Activated naive CD4-positive, alpha-beta T cell treated with anti-CD3 and anti-CD28 coated beads, Interleukin-2, amount 10 ng/mL, durations not matched to agents 7 days and 5 days (primary cell): ENCODE measurements at regions of chr14 and their contacts with region 1.

Region 1: DNA sequence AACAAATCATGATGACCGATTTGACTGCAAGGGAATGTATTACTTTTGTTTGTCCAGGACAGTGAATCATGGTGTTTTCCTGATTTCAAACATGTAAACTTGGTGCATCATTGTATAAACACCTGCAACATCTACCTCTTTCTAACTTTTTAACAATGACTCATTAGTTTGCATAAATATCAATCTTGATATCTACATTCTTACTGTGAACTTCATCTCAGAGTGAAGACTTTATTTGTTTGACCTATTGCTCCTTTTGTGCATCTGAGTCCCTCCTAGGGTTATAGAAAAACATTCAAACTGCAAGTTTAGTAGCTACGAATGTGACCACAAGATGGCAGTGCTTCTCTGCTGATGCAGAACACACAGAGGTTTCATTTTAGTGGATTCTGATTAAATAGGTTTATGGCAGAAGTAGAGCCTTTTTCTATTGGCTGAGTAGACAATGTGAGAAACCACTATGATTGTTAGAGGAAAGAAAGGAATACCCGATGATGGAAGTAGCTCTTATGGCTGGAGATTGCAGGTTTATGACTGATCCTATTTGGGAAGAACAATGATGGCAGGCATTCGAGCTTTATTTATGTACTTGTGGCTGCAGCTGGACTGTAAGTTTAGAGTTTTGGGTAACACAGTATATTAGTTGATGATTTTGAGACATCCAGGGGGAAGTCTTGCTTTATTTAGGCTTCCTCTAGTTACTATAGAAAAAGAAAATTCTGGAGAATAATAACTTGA is 244.2 kb upstream of the OR4E1 start:
- DNase-seq: peak; percentile 77
- H3K4me3 Mint-ChIP-seq: peak overlapping the region; percentile 71
- H3K27ac Mint-ChIP-seq: peak overlapping the region; percentile 81
- H3K4me1 Mint-ChIP-seq: peaks cover 78% of the 10 kb centered on the region
- H3K27me3 Mint-ChIP-seq: no peaks in the 10 kb centered on the region

Region 2: DNA sequence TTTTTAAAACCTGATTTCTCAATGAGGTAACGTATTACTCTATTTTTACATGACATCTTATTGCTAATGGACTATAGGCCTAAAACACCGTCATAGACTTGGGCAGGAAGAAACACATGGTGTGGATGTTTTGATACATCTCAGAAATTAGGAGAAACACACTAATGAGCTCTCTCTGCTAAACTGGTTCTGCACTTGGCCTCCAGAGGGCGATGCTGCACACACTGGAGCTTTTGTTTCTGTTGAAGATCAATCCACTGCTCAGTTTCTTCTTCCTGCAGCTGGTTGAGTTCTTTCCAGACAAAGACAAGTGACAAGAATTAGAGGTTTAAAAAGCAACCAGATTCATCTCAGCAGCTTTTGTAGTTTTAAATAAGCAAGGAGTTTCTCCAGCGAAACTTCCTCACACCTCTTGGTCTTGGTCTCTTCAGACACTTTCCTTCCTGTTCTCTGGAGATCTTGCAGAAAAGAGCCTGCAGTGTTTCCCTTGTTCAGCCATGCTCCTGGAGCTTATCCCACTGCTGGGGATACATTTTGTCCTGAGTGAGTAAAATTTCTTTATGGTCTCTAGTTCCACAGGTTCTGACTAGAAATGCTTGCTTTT is 65.7 kb before region 1 on chr14:
- CTCF ChIA-PET with region 1: interaction called, 10 read pairs
- DNase-seq: peak; percentile 85
- H3K4me3 Mint-ChIP-seq: peak overlapping the region; percentile 70
- H3K27ac Mint-ChIP-seq: peak overlapping the region; percentile 89
- H3K4me1 Mint-ChIP-seq: peaks cover 13% of the 10 kb centered on the region
- H3K27me3 Mint-ChIP-seq: peaks cover 13% of the 10 kb centered on the region

Region 3: DNA sequence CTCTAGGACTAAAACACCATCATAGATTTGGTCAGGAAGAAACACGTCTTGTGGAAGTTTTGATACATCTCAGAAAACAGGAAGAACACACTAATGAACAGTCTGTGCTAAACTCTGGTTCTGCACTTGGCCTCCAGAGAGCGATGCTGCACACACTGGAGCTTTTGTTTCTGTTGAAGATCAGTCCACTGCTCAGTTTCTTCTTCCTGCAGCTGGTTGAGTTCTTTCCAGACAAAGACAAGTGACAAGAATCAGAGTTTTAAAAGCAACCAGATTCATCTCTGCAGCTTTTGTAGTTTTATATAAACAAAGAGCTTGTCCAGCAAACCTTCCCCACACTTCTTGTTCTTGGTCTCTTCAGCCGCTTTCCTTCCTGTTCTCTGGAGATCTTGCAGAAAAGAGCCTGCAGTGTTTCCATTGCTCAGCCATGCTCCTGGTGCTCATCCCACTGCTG is 15.2 kb before region 1 on chr14:
- CTCF ChIA-PET with region 1: interaction called, 23 read pairs
- DNase-seq: peak; percentile 65
- H3K4me3 Mint-ChIP-seq: peak overlapping the region; percentile 67
- H3K27ac Mint-ChIP-seq: peak overlapping the region; percentile 76
- H3K4me1 Mint-ChIP-seq: peaks cover 19% of the 10 kb centered on the region
- H3K27me3 Mint-ChIP-seq: peaks cover 9% of the 10 kb centered on the region

Region 4: GRCh38 chr14:21965042-21965441 is 47.2 kb after region 1 on chr14:
- CTCF ChIA-PET with region 1: interaction called, 11 read pairs
- DNase-seq: peak; percentile 72
- H3K4me3 Mint-ChIP-seq: peak overlapping the region; percentile 49
- H3K27ac Mint-ChIP-seq: peak overlapping the region; percentile 49
- H3K4me1 Mint-ChIP-seq: peaks cover 43% of the 10 kb centered on the region
- H3K27me3 Mint-ChIP-seq: no peaks in the 10 kb centered on the region

Region 5: DNA sequence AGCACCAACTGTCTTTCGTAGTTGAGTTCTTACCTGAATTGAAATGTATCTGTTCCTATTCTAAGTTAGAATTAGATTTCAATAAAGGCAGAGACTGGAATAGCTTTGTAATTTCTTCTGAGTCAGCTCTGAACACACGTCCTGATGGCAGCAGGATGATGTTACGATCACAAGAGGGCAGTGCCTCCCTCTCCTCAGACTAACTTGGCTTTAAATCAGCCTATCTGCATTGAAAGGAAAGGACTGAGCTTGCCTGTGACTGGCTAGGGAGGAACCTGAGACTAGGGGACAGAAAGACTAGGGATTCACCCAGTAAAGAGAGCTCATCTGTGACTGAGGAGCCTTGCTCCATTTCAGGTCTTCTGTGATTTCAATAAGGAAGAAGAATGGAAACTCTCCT is 79.4 kb after region 1 on chr14:
- CTCF ChIA-PET with region 1: interaction called, 15 read pairs
- DNase-seq: peak; percentile 64
- H3K4me3 Mint-ChIP-seq: peak overlapping the region; percentile 95
- H3K27ac Mint-ChIP-seq: peak overlapping the region; percentile 97
- H3K4me1 Mint-ChIP-seq: peaks cover 34% of the 10 kb centered on the region
- H3K27me3 Mint-ChIP-seq: peaks cover 4% of the 10 kb centered on the region